Posterior cingulate gyrus (tissue), 11 donors: ENCODE measurements at regions of chr4 and their contacts with region 1.

Region 1: GRCh38 chr4:165327211-165328100 is at the start of gene MSMO1:
- DNase-seq: peak; percentile 99 to 100 (median 100)

Region 2: DNA sequence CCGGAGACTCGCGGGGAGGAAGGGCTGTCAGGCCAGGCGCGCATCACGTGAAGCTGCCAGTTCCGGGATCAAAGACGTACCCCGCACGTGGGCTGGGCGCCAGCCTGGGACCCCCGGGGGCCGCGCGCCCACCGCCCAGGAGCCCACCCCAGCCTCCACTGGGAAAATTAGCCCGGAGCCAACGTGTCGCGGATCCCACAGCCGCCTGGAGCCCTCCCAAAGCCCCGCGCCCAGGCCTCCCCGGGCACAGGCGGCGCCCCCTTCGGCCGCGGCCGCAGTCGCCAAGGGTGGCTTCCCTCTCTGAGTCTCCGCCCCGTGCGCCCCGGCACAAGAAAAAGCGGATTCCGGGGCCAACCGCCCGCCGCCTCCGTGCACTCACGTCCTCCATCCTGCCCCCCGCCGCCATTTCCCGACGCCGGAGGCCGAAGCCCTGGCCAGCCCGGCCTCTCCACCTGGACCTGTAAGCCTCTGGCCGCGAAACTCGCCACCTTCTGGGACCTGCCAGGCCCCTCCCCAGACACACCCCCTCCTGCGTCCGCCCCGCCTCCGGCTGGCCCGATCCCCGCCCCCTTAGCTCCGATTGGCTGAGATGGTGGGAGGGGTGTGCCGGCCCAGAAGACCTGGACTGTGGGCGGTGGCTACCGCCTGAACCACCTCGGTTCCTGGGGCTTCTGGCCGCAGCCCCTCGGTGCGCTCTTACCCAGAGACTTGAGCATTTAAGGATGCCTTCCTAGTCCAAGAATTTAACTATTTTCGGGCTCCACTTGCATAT is 214.9 kb before region 1 on chr4 and contains the start of gene TMEM192:
- intact Hi-C with region 1: loop called (anchors 5 kb)
- DNase-seq: peak; percentile 92 to 99 (median 96)

Region 3: GRCh38 chr4:165190591-165191347 is 136.7 kb before region 1 on chr4:
- intact Hi-C with region 1: no loop called
- DNase-seq: no peak